Endothelial cell of umbilical vein (primary cell): ENCODE measurements at regions of chr1 and their contacts with region 1.

Region 1: DNA sequence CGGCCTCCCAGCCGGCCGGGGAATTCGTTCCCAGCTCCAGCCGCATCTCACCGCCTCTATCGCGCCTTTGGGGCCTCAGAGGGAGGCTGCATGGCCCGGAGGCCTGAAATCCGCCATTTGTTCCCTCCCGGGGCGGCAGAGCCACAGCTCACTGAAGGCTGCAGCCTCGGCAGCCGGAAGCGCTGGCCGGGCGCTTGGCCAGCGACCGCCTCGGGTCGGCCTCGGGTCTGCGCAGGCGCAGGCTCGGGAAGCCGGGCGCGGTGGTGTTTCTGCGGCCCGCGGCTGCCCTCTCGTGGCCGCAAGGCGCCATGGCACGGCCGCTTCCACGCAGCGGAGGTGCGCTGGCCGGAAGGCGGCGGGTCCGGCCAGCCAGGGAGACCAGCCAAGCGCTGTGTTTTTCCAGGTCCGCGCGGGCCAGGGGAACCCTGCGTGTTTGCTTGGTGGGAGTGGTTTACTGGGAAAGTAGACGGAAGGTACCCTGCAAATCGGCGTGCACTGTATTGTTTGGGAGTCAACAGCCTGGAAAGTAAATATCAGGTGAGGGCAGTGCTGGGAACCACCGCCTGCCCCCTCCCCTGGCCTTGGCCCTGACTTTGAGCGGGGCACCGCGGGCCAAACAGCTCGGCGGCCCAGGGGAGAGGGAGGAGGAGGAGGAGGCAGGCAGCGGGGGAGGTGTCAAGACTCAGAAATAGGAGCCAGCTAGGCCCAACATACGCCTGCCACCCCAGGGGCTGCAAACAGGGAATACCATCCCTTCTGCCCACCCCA is 52.7 kb upstream of the CD34 start:
- DNase-seq: peak; percentile 94
- H3K4me3 ChIP-seq: peak overlapping the region in 2 of 3 experiments; percentile 1 to 17
- H3K27ac ChIP-seq: peak overlapping the region; percentile 81
- H3K4me1 ChIP-seq: peaks cover 29% of the 10 kb centered on the region
- H3K27me3 ChIP-seq: no peaks in the 10 kb centered on the region
- CTCF ChIP-seq: peak; percentile 92 to 99
- POLR2A ChIP-seq: peak; percentile 59

Region 2: DNA sequence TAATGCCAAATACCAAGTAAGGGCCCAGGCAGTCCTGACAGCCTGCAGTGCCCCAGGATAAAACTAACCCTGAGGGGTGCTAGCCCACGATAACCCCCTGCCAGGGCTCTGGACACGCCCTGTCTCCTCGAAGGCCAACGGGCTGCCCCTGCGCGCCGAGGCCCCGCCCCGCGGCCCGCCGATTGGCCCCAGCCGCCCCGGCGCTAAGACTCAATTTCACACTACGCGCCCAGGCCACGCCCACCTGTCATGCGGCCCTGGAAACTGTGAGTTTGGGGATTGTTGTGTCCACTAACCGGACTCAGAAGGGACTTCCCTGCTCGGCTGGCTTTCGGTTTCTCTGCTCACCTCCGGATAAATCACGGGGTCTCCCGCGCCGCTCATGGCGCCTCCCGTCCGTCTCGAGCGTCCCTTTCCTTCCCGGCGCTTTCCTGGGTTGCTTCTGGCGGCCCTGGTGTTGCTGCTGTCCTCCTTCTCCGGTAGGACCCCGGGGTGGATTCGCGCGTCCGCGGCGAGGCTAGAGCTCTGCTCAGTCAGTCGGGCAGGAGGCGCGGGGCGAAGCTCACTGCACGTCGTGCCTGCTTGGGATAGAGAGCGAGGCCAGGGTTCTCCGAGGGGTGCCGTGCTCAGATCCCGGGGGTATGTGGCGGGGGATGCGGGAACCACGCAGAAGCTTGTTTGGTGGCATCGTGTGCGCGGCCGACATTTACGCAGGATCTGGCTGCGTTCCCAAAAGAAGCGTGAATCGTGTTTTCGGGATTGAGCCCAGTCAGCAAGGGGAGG is 318.6 kb before region 1 on chr1 and contains the start of gene CR1L:
- CTCF ChIA-PET with region 1: no interaction called
- POLR2A ChIA-PET with region 1: no interaction called
- dilution Hi-C with region 1: no loop called
- intact Hi-C with region 1: no loop called
- DNase-seq: peak; percentile 76
- H3K4me3 ChIP-seq: peak within 1 kb of the TSS; percentile 35 to 83 (median 69)
- H3K27ac ChIP-seq: no peak within 1 kb of the TSS
- H3K4me1 ChIP-seq: peaks cover 10% of the 10 kb centered on the region
- H3K27me3 ChIP-seq: peaks cover 7 to 38% of the 10 kb centered on the region in 2 experiments
- CTCF ChIP-seq: no peak
- POLR2A ChIP-seq: no peak
- total RNA-seq, gene CR1L: not detected in 2 replicates

Region 3: DNA sequence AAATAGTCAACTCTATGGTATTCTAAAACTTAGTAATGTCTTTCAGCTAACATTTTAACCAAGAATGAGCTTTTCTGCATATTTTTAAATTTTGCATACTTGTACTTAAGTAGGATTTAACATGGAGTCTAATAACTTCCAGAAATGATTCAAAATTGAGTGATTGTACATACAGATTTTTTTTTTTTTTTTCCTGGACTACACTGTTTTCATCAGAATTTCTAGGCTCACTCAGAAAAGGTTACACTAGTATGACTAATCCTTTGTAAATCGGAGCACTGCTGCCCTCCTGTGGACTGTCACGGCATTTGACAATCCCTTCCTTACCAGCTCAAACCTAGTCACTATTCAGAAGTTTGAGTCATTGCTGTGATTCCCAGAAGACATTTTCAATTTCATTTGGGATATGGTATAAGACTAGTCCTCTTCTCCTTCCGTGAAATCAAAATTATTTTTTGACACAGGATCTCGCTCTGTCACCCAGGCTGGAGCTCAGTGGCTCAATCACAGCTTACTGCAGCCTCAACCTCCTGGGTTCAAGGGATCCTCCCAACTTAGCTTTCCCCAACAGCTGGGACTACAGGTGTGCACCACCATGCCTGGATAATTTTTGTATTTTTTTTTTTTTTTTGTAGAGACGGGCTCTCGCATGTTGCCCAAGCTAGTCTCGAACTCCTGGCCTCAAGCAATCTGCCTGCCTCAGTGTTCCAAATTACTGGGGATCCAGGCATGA is 166.2 kb before region 1 on chr1:
- CTCF ChIA-PET with region 1: interaction called, 11 read pairs
- POLR2A ChIA-PET with region 1: no interaction called
- dilution Hi-C with region 1: no loop called
- intact Hi-C with region 1: no loop called
- DNase-seq: peak; percentile 91
- H3K4me3 ChIP-seq: no peak overlapping the region
- H3K27ac ChIP-seq: peak overlapping the region; percentile 49
- H3K4me1 ChIP-seq: peaks cover 4% of the 10 kb centered on the region
- H3K27me3 ChIP-seq: no peaks in the 10 kb centered on the region
- CTCF ChIP-seq: peak; percentile 71 to 72
- POLR2A ChIP-seq: peak; percentile 40

Region 4: GRCh38 chr1:207876131-207876530 is 87.5 kb before region 1 on chr1:
- CTCF ChIA-PET with region 1: interaction called, 16 read pairs
- POLR2A ChIA-PET with region 1: no interaction called
- dilution Hi-C with region 1: no loop called
- intact Hi-C with region 1: no loop called
- DNase-seq: no peak
- H3K4me3 ChIP-seq: no peak overlapping the region
- H3K27ac ChIP-seq: no peak overlapping the region
- H3K4me1 ChIP-seq: no peaks in the 10 kb centered on the region
- H3K27me3 ChIP-seq: no peaks in the 10 kb centered on the region
- CTCF ChIP-seq: peak; percentile 7 to 8
- POLR2A ChIP-seq: no peak

Region 5: GRCh38 chr1:207910591-207911354 is 52.8 kb before region 1 on chr1 and contains the start of gene CD34:
- CTCF ChIA-PET with region 1: interaction called, 43 read pairs
- POLR2A ChIA-PET with region 1: interaction called, 3 read pairs
- dilution Hi-C with region 1: no loop called
- intact Hi-C with region 1: loop called (anchors 1 kb)
- DNase-seq: peak; percentile 46
- H3K4me3 ChIP-seq: peak within 1 kb of the TSS; percentile 12 to 44 (median 21)
- H3K27ac ChIP-seq: no peak within 1 kb of the TSS
- H3K4me1 ChIP-seq: peaks cover 14% of the 10 kb centered on the region
- H3K27me3 ChIP-seq: peaks cover 9 to 16% of the 10 kb centered on the region in 2 experiments
- CTCF ChIP-seq: no peak
- POLR2A ChIP-seq: no peak
- total RNA-seq, gene CD34: 115 and 174 TPM in 2 replicates

Region 6: DNA sequence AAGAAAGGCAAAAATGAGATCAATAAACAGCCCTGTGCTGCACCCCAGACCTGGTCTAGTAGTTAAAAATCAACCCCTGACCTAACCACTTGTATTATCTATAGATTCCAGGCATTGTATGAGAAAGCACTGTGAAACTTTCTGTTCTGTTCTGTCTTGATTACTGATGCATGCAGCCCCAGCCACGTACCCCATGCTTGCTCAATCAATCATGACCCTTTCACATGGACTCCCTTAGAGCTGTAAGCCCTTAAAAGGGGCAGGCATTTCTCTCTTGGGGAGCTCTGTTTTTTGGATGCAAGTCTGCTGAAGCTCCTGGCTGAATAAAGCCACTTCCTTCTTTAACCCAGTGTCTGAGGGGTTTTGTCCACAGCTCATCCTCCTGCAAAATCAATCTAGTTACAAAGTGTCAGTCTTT is 28.4 kb before region 1 on chr1:
- CTCF ChIA-PET with region 1: interaction called, 54 read pairs
- POLR2A ChIA-PET with region 1: no interaction called
- dilution Hi-C with region 1: no loop called
- intact Hi-C with region 1: loop called (anchors 1 kb)
- DNase-seq: no peak
- H3K4me3 ChIP-seq: no peak overlapping the region
- H3K27ac ChIP-seq: no peak overlapping the region
- H3K4me1 ChIP-seq: peaks cover 26% of the 10 kb centered on the region
- H3K27me3 ChIP-seq: no peaks in the 10 kb centered on the region
- CTCF ChIP-seq: no peak
- POLR2A ChIP-seq: no peak

Region 7: GRCh38 chr1:207997486-207998268 is 34.1 kb after region 1 on chr1:
- CTCF ChIA-PET with region 1: interaction called, 37 read pairs
- POLR2A ChIA-PET with region 1: no interaction called
- dilution Hi-C with region 1: no loop called
- intact Hi-C with region 1: loop called (anchors 1 kb)
- DNase-seq: peak; percentile 75
- H3K4me3 ChIP-seq: no peak overlapping the region
- H3K27ac ChIP-seq: no peak overlapping the region
- H3K4me1 ChIP-seq: no peaks in the 10 kb centered on the region
- H3K27me3 ChIP-seq: peaks cover 14 to 29% of the 10 kb centered on the region in 2 experiments
- CTCF ChIP-seq: peak; percentile 89 to 92
- POLR2A ChIP-seq: no peak